PC-9 (cell line): ENCODE measurements at regions of chr11 and their contacts with region 1.

Region 1: DNA sequence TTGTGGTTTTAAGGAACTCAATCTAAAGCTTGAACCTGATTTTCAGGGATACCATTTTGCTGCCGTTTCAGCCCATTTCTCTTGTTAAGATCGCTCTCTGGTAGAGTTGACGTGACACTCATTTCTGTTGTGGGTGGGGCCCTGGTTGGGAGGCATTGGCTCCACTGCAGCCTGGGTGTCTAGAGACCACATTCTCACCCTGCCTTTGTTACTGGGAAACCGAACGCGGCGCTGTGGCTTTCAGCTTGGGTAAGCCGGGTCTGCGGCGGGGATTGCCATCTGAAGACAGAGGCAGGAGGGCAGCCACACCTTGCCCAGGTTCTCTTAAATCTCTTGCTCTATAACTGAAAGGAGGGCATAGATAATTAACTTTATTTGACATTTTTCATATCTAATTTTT is 3.2 kb downstream of the EHF start:
- DNase-seq: peak; percentile 79 to 80
- H3K4me3 ChIP-seq: peak overlapping the region; percentile 89
- H3K27ac ChIP-seq: peak overlapping the region; percentile 96
- H3K4me1 ChIP-seq: peaks cover 67% of the 10 kb centered on the region
- H3K27me3 ChIP-seq: no peaks in the 10 kb centered on the region
- CTCF ChIP-seq: peak; percentile 27; the same call in 1 of the 2 replicates

Region 2: GRCh38 chr11:34585735-34586487 is 38.2 kb before region 1 on chr11:
- CTCF ChIA-PET with region 1: no interaction called
- POLR2A ChIA-PET with region 1: no interaction called
- intact Hi-C with region 1: loop called (anchors 1 kb)
- DNase-seq: peak in 1 of 2 experiments; percentile 64
- H3K4me3 ChIP-seq: no peak overlapping the region
- H3K27ac ChIP-seq: peak overlapping the region; percentile 4; the same call in 1 of the 2 replicates
- H3K4me1 ChIP-seq: peaks cover 35% of the 10 kb centered on the region
- H3K27me3 ChIP-seq: no peaks in the 10 kb centered on the region
- CTCF ChIP-seq: peak; percentile 94

Region 3: GRCh38 chr11:34599406-34599901 is 24.6 kb before region 1 on chr11:
- CTCF ChIA-PET with region 1: interaction called, 3 read pairs
- POLR2A ChIA-PET with region 1: interaction called, 22 read pairs
- intact Hi-C with region 1: loop called (anchors 1 kb)
- DNase-seq: peak; percentile 66 to 98
- H3K4me3 ChIP-seq: peak overlapping the region; percentile 24; the same call in 1 of the 2 replicates
- H3K27ac ChIP-seq: peak overlapping the region; percentile 91
- H3K4me1 ChIP-seq: peaks cover 45% of the 10 kb centered on the region
- H3K27me3 ChIP-seq: no peaks in the 10 kb centered on the region
- CTCF ChIP-seq: no peak

Region 4: GRCh38 chr11:34633990-34634693 is 10.1 kb after region 1 on chr11:
- CTCF ChIA-PET with region 1: no interaction called
- POLR2A ChIA-PET with region 1: interaction called, 4 read pairs
- intact Hi-C with region 1: loop called (anchors 1 kb)
- DNase-seq: peak in 1 of 2 experiments; percentile 90
- H3K4me3 ChIP-seq: peak overlapping the region; percentile 45
- H3K27ac ChIP-seq: peak overlapping the region; percentile 91
- H3K4me1 ChIP-seq: peaks cover 100% of the 10 kb centered on the region
- H3K27me3 ChIP-seq: no peaks in the 10 kb centered on the region
- CTCF ChIP-seq: peak; percentile 41; the same call in 1 of the 2 replicates

Region 5: GRCh38 chr11:34640050-34640923 is 16.2 kb after region 1 on chr11:
- CTCF ChIA-PET with region 1: interaction called, 5 read pairs
- POLR2A ChIA-PET with region 1: interaction called, 10 read pairs
- intact Hi-C with region 1: loop called (anchors 1 kb)
- DNase-seq: peak; percentile 92 to 100
- H3K4me3 ChIP-seq: peak overlapping the region; percentile 38; the same call in 1 of the 2 replicates
- H3K27ac ChIP-seq: peak overlapping the region; percentile 84
- H3K4me1 ChIP-seq: peaks cover 98% of the 10 kb centered on the region
- H3K27me3 ChIP-seq: no peaks in the 10 kb centered on the region
- CTCF ChIP-seq: no peak

Region 6: DNA sequence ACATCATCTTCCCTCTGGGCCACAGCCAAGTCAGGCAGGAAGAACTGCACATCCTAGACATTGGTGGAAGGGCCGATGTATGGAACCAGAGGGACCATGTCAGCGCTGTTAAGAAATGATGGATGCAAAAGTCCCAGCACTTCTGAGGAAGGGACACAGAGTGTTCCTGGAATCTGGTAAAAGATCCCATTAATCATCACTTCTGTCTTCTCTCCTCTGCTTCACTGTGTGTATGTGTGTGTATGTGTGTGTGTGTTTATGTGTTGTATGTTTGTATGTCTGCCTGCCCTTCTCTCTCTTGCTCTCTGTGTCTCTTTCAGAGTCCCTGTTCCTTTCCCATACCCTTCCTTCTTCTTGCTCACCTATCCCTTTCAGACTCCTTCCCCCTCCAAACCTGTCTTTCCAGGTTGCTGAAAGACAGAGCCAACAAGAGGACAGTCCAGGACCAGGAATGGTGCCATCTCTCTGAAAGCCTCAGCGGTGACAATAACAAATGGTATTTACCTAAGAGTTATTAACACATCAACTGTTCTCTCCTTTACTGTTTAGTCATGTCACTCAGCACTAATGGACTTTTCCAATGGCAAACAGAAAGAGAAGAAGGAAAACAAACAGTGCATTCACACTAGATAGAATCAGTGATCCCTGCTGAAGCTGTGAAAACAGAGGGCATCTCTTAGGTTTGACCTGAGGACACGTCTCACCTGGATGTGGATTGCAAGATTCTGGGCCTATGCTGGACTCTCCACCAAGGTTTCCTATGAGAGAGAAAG is 43.9 kb after region 1 on chr11:
- CTCF ChIA-PET with region 1: no interaction called
- POLR2A ChIA-PET with region 1: no interaction called
- intact Hi-C with region 1: loop called (anchors 5 kb)
- DNase-seq: peak; percentile 78 to 99
- H3K4me3 ChIP-seq: no peak overlapping the region
- H3K27ac ChIP-seq: peak overlapping the region; percentile 85
- H3K4me1 ChIP-seq: peaks cover 50% of the 10 kb centered on the region
- H3K27me3 ChIP-seq: no peaks in the 10 kb centered on the region
- CTCF ChIP-seq: no peak

Region 7: DNA sequence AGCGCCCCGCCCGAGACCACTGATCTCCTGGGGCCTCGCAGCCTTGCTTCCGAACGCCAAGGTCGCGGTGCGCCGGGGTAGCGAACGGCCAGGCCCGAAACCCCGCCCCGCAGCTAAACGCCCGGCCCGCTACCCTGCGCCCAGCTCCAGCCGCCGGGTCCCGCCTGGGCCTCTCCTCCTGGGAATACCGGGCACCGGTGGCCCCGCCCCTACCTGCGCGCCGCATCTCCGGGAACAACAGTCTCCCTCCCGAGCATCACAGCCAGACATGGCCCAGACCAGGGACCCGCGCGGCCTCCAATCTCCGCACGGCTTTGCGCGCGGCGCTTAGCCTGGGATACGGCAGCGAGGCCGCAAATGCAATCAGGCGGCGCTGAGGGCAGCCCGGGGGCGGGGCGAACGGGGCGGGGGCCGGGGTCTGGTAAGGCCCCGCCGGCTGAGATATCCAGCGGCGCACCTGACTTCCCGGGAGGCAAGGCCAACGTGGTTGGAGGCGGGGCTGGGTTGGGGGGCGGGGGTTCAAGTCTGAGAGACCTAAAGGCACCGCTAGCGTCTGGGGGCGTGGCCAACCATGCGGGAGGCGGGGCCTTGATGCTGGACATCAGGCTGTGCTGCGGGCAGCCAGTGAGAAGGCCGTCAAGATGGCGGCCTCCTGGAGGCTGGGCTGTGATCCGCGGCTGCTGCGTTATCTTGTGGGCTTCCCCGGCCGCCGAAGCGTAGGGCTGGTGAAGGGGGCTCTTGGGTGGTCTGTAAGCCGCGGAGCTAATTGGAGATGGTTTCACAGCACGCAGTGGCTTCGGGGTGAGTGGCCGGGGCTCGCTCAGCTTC is 292.2 kb after region 1 on chr11 and contains the starts of genes APIP and PDHX:
- CTCF ChIA-PET with region 1: interaction called, 14 read pairs
- POLR2A ChIA-PET with region 1: no interaction called
- intact Hi-C with region 1: no loop called
- DNase-seq: peak; percentile 98 to 99
- H3K4me3 ChIP-seq: peak within 1 kb of the TSS; percentile 74
- H3K27ac ChIP-seq: peak within 1 kb of the TSS; percentile 83
- H3K4me1 ChIP-seq: peaks cover 26% of the 10 kb centered on the region
- H3K27me3 ChIP-seq: no peaks in the 10 kb centered on the region
- CTCF ChIP-seq: no peak
- total RNA-seq, gene APIP: 34.1 and 41.0 TPM in 2 replicates
- total RNA-seq, gene PDHX: 44.7 and 47.0 TPM in 2 replicates